ENCODE measurements at regions of chr1 and their contacts with region 1.

Region 1: DNA sequence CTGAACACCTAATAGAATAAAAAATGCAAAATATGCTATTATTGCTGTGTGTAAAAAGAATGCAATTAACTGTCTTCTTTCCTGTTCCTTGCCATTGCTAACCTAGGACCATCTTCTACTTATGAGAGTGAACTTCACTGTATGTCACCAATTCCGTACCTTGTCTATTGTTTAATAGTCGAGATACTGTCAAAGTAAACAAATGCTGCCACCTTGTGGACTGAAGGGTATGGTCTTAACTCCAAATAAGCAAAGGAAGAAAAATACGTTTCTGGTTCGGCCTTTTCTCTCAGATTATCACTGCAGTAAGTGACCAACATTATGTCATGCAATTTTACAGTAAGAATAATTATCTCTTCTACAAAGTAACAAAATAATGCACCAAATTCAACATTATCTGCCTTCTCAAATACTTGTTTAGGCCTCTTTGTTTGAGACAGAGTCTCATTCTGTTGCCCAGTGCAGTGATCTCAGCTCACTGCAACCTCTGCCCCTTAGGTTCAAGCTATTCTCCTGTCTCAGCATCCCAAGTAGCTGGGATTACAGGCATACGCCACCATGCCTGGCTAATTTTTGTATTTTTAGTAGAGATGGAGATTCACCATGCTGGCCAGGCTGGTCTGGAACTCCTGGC is 133.4 kb downstream of the COP1 start:
- DNase-seq: no peak
- H3K4me3 ChIP-seq: no peak overlapping the region
- H3K27ac ChIP-seq: no peak overlapping the region
- H3K4me1 ChIP-seq: peaks cover 0 to 9% (median 0%) of the 10 kb centered on the region in 4 donors
- H3K27me3 ChIP-seq: no peaks in the 10 kb centered on the region
- CTCF ChIP-seq: peak; percentile 61 to 74

Region 2: GRCh38 chr1:175373786-175374623 is 699.6 kb before region 1 on chr1:
- intact Hi-C with region 1: loop called (anchors 5 kb)
- DNase-seq: no peak
- H3K4me3 ChIP-seq: no peak overlapping the region
- H3K27ac ChIP-seq: no peak overlapping the region
- H3K4me1 ChIP-seq: peaks cover 0 to 6% (median 5%) of the 10 kb centered on the region in 4 donors
- H3K27me3 ChIP-seq: no peaks in the 10 kb centered on the region
- CTCF ChIP-seq: peak; percentile 60 to 63